ENCODE measurements at regions of chr22 and their contacts with region 1.

Region 1: GRCh38 chr22:40361100-40361499 is 9.3 kb upstream of the SGSM3 start:
- DNase-seq: no peak
- H3K4me3 ChIP-seq: no peak overlapping the region
- H3K27ac ChIP-seq: no peak overlapping the region
- H3K4me1 ChIP-seq: no peaks in the 10 kb centered on the region
- H3K27me3 ChIP-seq: no peaks in the 10 kb centered on the region
- CTCF ChIP-seq: no peak

Region 2: DNA sequence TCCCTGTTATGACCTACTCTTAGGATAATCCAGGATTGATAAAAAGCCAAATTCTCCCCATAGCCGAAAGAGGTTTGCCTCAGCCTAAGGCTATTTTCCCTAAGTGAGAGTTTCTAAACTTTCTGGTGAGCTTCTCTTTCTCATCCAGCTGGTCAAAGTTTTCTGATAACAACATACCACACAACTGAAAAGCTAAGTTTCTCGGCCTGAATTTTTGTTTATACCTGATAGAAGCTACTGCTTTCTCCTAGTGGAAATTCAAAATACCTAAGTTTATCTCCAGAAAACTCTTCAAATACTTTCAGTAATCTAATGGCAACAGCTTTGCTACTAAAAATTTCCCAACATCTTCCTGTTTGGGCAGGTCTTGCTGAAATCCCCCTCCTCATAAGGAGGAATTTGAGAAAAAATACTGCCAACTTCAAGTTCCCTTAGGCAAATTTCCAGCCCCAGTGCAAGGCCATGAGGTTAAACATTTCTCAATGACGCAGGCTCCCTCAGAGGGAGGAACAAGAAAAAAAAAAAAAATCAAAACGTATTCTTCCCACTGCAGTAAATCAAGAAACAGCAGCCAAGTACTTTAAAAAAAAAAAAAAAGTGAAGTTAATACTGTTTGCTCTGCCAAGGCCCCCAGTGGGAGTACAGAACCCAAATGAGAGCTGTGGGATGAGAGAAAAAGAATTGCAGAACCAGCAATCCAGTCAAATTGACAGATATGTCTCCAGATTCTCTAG is 148.5 kb after region 1 on chr22:
- CTCF ChIA-PET with region 1: interaction called, 12 read pairs
- POLR2A ChIA-PET with region 1: no interaction called
- intact Hi-C with region 1: no loop called
- DNase-seq: peak; percentile 45 to 87
- H3K4me3 ChIP-seq: peak overlapping the region; percentile 33; the same call in 1 of the 2 replicates
- H3K27ac ChIP-seq: peak overlapping the region; percentile 94
- H3K4me1 ChIP-seq: peaks cover 78% of the 10 kb centered on the region
- H3K27me3 ChIP-seq: no peaks in the 10 kb centered on the region
- CTCF ChIP-seq: no peak

Measured in PC-9 (cell line).